PC-9 (cell line): ENCODE measurements at regions of chr7 and their contacts with region 1.

Region 1: DNA sequence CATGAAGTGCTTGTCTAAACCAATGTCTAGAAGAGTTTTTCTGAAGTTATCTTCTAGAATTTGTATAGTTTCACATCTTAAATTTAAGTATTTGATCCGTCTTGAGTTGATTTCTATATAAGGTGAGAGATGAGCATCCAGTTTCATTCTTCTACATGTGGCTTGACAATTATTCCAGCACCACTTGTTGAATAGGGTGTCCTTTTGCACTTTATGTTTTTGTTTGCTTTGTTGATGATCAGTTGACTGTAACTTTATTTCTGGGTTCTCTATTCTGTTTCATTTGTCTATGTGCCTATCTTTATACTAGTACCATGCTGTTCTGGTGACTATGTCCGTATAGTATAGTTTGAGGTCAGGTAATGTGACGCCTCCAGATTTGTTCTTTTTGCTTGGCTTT is 426.6 kb upstream of the CHRM2 start:
- DNase-seq: no peak
- H3K4me3 ChIP-seq: no peak overlapping the region
- H3K27ac ChIP-seq: no peak overlapping the region
- H3K4me1 ChIP-seq: no peaks in the 10 kb centered on the region
- H3K27me3 ChIP-seq: no peaks in the 10 kb centered on the region
- CTCF ChIP-seq: no peak

Region 2: GRCh38 chr7:136405931-136406777 is 35.7 kb before region 1 on chr7:
- CTCF ChIA-PET with region 1: no interaction called
- POLR2A ChIA-PET with region 1: no interaction called
- intact Hi-C with region 1: no loop called
- DNase-seq: peak in 1 of 2 experiments; percentile 38
- H3K4me3 ChIP-seq: no peak overlapping the region
- H3K27ac ChIP-seq: no peak overlapping the region
- H3K4me1 ChIP-seq: no peaks in the 10 kb centered on the region
- H3K27me3 ChIP-seq: no peaks in the 10 kb centered on the region
- CTCF ChIP-seq: peak; percentile 92

Region 3: DNA sequence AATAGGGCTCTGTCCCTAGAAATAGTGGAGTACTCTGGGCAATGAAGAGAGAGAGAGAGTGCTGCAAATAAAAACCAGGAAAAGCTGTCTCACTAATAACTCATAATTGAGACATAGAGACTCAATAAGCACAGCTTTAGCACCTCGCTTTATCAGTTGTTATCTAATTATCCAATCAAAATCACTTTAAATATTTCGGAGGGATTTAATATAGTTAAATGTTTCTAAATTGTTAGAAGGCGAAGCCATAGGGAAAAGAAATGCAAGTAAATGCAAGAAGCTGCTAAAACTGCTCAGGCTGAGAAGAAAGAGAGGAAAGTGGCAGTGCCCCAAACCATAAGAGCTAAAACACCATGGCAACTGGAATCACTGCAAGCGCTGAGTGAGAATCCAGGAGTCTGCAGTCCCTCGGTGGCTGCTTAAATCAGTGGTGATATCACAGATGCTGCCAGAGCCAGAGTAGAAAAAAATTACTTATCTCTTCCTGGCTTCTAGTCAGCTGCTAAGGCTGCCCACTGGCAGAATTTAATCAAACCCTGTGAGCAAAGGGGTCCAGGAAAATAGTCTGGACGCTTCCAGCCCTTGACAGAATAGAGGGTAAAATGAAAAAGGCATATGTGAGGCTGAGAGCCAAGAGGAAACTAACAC is 276.2 kb after region 1 on chr7:
- CTCF ChIA-PET with region 1: interaction called, 12 read pairs
- POLR2A ChIA-PET with region 1: no interaction called
- intact Hi-C with region 1: no loop called
- DNase-seq: no peak
- H3K4me3 ChIP-seq: no peak overlapping the region
- H3K27ac ChIP-seq: no peak overlapping the region
- H3K4me1 ChIP-seq: no peaks in the 10 kb centered on the region
- H3K27me3 ChIP-seq: no peaks in the 10 kb centered on the region
- CTCF ChIP-seq: no peak